ENCODE measurements at regions of chr6 and their contacts with region 1.

Region 1: DNA sequence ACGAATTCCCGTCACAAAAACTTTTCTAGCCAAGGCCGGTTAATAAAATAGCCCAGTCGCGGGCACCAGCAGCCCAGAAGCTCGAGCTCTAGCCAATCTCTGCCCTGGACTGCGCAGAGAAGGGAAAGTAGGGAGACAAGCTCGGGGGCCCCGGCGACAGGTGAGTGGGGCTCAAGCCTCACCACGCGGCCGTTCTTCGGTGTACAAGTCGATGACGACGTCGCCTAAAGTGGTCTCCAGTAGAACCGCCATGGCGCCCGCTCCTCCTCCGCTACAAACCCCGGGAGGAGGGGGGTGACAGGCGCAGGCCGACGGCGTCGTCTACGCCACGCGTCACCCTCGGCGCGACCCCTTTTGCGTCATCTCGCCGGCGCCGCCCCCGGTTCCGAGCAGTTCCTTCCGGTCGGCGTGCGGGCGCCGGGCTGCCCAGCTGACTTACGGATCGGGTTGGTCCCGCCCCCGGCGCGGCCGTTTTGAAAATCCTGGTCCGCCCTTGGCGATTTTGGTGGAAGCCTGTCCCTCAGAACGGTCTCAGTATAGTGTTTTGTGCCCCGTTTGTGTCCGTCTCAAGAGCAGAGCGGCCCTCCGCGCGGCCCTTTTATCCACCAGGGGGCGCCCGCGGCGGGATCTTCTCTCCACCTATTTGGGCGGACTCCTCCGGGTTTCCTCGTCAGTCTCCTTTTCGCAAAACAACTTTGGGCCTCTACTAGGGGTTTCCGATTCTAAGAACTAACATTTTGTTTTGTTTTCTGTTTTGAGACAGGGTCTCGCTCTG is at the start of gene PPIL4:
- DNase-seq: peak; percentile 98
- ATAC-seq: peak; percentile 88
- H3K4me3 Mint-ChIP-seq: peak within 1 kb of the TSS; percentile 95
- H3K27ac Mint-ChIP-seq: peak within 1 kb of the TSS; percentile 96
- H3K4me1 Mint-ChIP-seq: peaks cover 37% of the 10 kb centered on the region
- H3K27me3 Mint-ChIP-seq: no peaks in the 10 kb centered on the region
- CTCF ChIP-seq: peak; percentile 77
- total RNA-seq, gene PPIL4: 20.9 and 24.0 TPM in 2 replicates

Region 2: DNA sequence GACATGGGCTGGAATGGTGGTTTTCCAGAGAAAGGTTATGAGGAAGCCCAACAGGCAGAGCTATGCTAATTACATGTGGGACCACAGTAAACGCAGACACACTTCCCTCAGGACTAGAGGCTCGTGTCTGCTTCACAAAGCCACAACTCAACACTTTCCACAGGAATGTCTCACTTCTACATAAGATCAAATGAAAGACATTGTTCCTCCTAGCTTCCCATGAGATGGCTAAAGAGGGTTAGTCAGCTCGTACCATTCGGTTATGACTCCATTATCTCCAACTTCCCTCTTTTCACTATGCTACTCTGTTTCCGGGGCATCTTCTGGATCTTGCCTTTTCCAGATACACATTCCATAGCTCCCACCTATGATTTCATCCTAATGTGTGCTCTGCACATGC is 32.0 kb before region 1 on chr6:
- CTCF ChIA-PET with region 1: no interaction called
- POLR2A ChIA-PET with region 1: interaction called, 10 read pairs
- intact Hi-C with region 1: no loop called
- DNase-seq: no peak
- ATAC-seq: no peak
- H3K4me3 Mint-ChIP-seq: no peak overlapping the region
- H3K27ac Mint-ChIP-seq: peak overlapping the region; percentile 50
- H3K4me1 Mint-ChIP-seq: peaks cover 23% of the 10 kb centered on the region
- H3K27me3 Mint-ChIP-seq: no peaks in the 10 kb centered on the region
- CTCF ChIP-seq: no peak

Region 3: GRCh38 chr6:149648148-149649145 is 102.5 kb after region 1 on chr6 and contains the start of gene KATNA1:
- CTCF ChIA-PET with region 1: no interaction called
- POLR2A ChIA-PET with region 1: interaction called, 3 read pairs
- intact Hi-C with region 1: loop called (anchors 1 kb)
- DNase-seq: peak; percentile 89
- ATAC-seq: peak; percentile 95
- H3K4me3 Mint-ChIP-seq: peak within 1 kb of the TSS; percentile 86
- H3K27ac Mint-ChIP-seq: peak within 1 kb of the TSS; percentile 67
- H3K4me1 Mint-ChIP-seq: peaks cover 33% of the 10 kb centered on the region
- H3K27me3 Mint-ChIP-seq: no peaks in the 10 kb centered on the region
- CTCF ChIP-seq: no peak
- total RNA-seq, gene KATNA1: 17.8 and 19.2 TPM in 2 replicates

Region 4: DNA sequence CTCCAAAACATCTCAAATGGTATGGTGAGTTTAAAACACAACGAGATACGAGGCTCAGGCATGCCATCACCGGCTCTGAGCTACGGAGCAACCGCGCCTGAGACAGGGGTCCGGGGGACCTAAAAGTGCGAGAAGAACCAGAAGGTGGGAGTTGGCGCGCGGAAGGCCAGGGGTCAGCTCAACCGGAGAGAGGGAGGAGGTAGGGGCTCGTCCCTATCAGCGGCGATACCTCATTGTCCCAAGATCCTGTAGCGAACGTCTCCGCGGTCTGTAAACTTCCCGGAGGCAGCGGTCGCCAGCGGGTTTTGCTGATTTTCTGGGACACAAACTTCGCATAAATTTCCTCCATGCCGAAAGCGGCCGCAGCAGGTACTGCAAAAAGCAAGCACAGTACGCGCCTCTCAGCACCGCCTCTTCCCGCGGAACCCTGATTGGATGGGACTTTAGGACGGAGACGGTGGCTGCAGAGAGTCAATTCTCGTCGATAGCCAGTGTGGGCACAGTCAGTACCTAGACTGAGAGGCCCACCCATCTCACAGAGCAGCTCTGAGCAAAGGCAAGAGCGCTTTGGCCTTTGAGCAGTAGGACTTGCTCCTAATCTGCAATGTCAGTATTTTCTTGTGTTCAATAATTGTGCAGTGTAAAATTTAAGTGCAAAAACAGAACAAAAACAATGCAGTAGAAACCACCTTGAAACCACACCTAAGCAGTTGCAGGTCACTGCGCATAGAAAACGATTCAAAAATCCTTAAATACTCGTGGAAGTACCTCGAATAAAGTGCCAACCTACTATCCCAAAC is 200.4 kb after region 1 on chr6 and contains the start of gene NUP43:
- CTCF ChIA-PET with region 1: no interaction called
- POLR2A ChIA-PET with region 1: interaction called, 8 read pairs
- intact Hi-C with region 1: loop called (anchors 1 kb)
- DNase-seq: peak; percentile 80
- ATAC-seq: peak; percentile 69
- H3K4me3 Mint-ChIP-seq: peak within 1 kb of the TSS; percentile 97
- H3K27ac Mint-ChIP-seq: peak within 1 kb of the TSS; percentile 89
- H3K4me1 Mint-ChIP-seq: peaks cover 29% of the 10 kb centered on the region
- H3K27me3 Mint-ChIP-seq: no peaks in the 10 kb centered on the region
- CTCF ChIP-seq: no peak
- total RNA-seq, gene NUP43: 46.9 and 50.4 TPM in 2 replicates

Region 5: GRCh38 chr6:150016324-150017185 is 470.6 kb after region 1 on chr6:
- CTCF ChIA-PET with region 1: no interaction called
- POLR2A ChIA-PET with region 1: no interaction called
- intact Hi-C with region 1: loop called (anchors 5 kb)
- DNase-seq: peak; percentile 36
- ATAC-seq: peak; percentile 85
- H3K4me3 Mint-ChIP-seq: no peak overlapping the region
- H3K27ac Mint-ChIP-seq: no peak overlapping the region
- H3K4me1 Mint-ChIP-seq: peaks cover 16% of the 10 kb centered on the region
- H3K27me3 Mint-ChIP-seq: peaks cover 62% of the 10 kb centered on the region
- CTCF ChIP-seq: no peak